ENCODE measurements at regions of chr21 and their contacts with region 1.

Region 1: DNA sequence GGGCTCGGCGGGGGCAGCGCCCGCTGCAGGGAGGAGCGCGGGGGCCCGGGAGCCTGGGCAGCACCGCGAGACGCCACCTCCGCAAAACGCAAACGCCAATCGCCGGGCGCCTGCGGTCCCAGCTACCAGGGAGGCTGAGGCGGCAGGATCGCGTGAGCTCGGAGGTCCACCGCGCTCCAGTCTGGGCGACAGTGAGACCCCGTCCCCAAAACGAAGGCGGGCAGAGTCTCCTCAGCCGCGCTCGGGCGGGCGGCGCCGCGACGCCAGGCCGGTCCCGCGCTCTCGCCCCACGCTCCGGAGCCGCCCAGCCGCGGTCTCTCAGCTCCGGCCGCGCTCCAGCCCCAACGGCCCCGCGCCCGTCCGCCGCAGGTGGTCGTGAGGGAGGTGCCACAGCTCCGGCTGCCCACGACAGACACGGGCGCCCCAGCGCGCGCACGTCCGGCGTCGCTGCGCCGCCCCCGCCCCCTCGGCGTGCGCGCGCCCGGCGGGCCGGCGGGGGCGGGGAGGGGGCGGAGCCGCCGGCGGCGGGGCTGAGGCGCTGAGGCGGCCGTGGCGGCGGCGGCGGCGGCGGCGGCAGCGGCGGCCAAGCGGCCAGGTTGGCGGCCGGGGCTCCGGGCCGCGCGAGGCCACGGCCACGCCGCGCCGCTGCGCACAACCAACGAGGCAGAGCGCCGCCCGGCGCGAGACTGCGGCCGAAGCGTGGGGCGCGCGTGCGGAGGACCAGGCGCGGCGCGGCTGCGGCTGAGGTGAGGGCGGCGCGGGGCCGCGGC is at the start of gene ADARB1:
- DNase-seq: peak; percentile 76
- ATAC-seq: peak; percentile 82
- total RNA-seq, gene ADARB1: 11.6 TPM

Region 2: DNA sequence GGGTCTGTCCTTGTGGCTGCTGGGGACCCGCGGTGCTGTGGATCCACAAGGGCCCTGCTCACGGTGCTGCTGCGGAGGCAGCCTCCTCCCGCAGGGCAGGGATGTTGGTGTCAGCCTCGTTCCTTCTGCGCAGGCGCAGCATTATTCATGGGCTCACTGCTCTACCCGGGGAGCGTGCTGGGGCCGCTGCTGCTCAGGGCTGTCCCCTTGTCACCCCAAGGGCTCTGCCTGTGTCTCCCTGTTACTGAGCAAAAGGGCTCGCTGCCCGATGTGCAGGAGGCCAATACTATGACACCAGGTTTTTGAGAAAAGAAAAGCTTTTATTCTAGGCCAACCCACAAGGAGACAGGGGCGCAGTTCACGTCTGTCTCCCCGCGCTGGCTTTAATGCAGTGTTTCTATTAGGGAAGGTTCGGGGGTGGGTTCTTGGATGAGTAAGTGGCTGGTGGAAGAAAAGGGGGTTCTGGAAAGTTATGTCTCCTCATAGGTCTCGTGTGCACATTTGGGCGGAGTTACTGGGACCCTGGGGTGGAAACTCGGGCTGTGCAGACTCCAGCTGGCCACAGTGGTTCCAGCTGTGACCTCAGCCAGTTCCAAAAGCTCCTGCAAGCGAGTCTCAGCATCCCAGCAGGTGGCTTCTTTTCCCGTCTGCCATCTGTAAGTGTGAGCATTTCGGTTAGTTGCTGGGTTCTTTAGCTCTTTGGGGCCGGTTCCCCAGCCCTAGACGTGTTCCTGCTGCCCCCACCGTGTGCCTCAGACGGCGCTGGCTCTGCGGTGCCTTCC is 659.8 kb before region 1 on chr21:
- intact Hi-C with region 1: no loop called
- DNase-seq: peak; percentile 13
- ATAC-seq: no peak

Region 3: GRCh38 chr21:44962403-44962966 is 111.7 kb before region 1 on chr21:
- intact Hi-C with region 1: loop called (anchors 10 kb)
- DNase-seq: peak; percentile 43
- ATAC-seq: peak; percentile 36

Region 4: DNA sequence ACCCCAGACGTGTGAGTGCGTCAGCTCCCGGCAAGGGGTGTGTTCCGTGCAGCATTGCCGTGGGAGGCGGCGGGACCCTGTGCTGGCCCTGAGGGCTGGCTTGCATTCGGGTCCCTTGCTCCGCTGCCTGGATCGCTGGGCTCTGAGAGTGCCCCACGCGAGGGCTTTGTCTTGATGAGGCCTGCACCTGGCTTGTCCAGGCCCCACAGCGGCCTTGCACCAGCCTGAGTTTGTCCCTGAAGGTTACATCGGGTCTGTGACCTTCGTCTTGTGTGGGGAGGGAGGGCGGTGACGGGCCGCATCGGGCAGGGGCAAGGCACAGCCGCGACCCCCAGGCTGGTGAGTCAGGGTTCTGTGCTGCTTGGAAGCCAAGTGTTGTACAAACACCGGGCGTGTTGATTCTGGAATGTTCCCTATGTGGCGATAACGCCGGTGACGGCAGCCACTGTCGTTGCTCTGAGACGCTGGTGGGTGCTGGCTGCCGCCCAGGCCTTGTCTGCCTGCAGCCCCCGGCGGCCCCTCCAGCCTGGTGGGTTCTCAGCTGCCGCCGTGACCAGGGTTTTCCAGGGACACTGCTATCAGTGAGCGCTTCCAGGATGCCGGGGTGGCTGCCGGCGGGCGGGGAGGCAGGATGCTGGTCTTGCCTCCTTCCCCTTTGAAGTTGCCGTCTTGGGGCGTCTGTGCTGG is 91.5 kb before region 1 on chr21:
- intact Hi-C with region 1: no loop called
- DNase-seq: peak; percentile 56
- ATAC-seq: peak; percentile 30

Region 5: DNA sequence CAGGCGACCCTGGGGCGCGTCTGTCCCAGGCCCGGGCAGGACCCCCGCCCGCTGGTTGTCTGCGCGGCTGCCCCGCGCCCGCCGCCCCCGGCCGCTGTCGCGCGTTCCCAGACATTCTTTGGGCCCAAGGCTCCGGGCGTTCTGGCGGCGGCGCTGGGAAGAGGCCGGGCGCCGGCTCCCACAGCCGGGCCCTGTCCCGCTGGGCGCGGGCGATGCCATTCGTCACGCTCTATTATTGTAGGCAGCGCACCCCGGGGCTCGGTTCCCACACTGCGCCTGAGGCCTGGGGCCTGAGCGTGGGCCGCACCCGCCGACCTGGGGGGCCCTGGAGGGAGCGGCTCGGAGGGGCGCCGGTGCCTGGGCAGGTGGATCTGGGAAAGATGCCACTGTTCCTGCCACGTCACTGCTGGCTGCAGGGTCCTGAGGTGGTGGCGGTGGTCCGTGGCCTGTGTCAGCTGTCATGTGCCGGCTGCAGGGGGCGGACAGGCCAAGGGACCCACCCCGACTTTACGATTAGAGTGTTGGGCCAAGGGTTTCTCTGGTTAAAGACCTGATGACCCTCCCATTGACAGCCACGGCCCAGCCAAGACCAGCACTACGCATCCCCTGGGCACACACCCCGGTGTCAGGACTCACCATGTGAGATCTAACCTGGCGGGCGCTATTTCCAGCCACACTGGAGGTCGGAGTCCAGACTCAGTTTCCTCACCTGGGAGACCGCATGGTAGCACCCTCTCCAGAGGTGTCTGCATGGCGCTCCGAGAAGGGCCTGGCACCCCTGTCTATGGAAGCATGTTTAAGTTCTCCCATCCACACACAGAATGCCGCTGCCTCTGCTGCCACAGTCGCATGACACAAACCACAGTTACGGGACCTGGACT is 54.9 kb before region 1 on chr21:
- intact Hi-C with region 1: no loop called
- DNase-seq: peak; percentile 63
- ATAC-seq: peak; percentile 64

Region 6: GRCh38 chr21:45129189-45129923 is 55.1 kb after region 1 on chr21:
- intact Hi-C with region 1: loop called (anchors 5 kb)
- DNase-seq: peak; percentile 77
- ATAC-seq: peak; percentile 79

Measured in Right ventricle myocardium superior (tissue), 1 donor.